ENCODE measurements at regions of chr14 and their contacts with region 1.

Region 1: DNA sequence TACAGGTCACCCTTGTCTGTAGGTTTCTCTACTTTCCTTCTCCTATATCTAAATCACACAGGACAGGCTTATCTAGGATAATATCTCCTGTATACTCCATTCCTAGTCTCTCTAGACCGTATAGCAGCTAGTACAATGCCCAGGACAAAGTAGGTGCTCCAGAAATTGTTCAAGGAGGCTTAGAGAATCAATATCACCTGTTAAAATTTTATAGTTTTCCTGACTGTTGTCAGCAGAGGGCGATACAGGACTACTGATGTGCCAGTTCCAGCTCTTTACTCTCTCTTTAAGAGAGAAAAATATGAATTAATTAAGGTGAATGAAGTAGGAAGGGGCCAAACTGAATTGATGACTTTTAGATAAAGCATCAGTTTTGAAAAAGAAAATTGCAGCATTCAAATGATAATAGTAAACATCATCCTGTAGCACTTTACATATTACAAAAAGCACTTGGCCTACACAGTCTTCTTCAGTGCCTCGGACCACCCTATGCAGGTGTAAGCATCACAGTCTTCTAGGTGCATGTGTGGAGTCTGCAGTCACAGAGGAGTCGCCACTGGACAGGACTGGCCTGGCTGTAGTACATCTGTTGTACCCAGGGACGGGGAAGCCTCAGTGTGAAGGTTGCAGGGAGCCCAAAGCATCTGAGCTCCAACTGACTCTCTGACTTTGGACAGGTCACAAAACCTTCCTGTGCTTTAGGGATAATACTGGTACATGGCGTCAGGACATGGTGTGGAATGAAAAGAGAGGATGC is 61.9 kb upstream of the MAX start:
- DNase-seq: peak; percentile 79
- ATAC-seq: peak; percentile 80
- H3K4me3 ChIP-seq: no peak overlapping the region
- H3K27ac ChIP-seq: no peak overlapping the region
- H3K4me1 ChIP-seq: peaks cover 4% of the 10 kb centered on the region; the same call in 1 of the 2 replicates
- H3K27me3 ChIP-seq: no peaks in the 10 kb centered on the region
- CTCF ChIP-seq: peak; percentile 94

Region 2: DNA sequence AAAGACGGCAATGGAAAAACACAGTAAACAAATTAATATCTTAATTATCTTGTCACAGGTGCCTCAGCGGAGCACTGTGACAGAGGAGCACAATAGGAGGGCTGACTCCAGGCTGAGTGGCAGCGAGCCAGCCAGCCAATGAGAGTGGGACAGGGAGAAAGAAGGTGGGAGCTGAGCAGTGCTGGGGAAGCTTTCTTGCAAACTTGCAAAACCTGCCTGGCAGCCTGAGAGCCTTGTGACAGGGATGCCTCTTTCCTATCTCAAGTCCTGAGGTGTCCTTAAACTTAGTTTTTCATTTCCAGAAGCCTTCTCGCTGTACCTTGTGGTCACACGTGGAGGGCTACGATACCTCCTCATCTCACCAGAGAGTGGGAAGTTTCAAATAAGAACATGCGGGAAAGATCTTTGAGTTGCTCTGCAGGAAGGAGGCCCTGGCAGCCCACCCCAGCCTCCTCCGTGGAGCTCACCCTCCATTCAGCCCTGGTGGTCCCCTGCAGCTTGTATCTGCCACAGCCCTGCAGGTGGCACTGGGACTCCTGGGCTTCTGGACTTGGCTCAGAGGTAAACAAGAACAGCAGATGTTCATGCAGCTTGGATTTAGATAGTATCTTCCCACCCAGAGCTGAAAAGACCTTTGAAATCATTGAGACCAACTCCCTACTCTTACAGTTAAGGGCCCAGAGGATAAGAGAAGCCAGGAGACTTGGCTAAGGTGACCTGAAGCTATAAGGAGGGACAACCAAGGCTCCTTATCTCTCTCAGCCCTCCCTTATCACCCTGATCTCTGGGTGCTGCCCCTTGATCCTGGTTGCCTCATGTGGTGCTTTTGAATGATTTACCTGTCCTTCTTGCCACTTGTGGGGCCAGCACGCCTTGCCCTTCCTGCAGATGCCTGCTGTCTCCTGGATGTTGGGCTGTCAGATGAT is 91.6 kb after region 1 on chr14:
- CTCF ChIA-PET with region 1: no interaction called
- POLR2A ChIA-PET with region 1: no interaction called
- intact Hi-C with region 1: no loop called
- DNase-seq: peak; percentile 95
- ATAC-seq: peak; percentile 62
- H3K4me3 ChIP-seq: peak overlapping the region; percentile 34
- H3K27ac ChIP-seq: peak overlapping the region; percentile 96
- H3K4me1 ChIP-seq: peaks cover 58% of the 10 kb centered on the region
- H3K27me3 ChIP-seq: no peaks in the 10 kb centered on the region
- CTCF ChIP-seq: no peak

Region 3: GRCh38 chr14:65373679-65374039 is 209.4 kb after region 1 on chr14:
- CTCF ChIA-PET with region 1: interaction called, 7 read pairs
- POLR2A ChIA-PET with region 1: no interaction called
- intact Hi-C with region 1: loop called (anchors 1 kb)
- DNase-seq: peak; percentile 29
- ATAC-seq: peak; percentile 75
- H3K4me3 ChIP-seq: peak overlapping the region; percentile 58
- H3K27ac ChIP-seq: 0 out of 2 replicates have a peak overlapping the region, but pooled peaks have one; percentile 0
- H3K4me1 ChIP-seq: no peaks in the 10 kb centered on the region
- H3K27me3 ChIP-seq: no peaks in the 10 kb centered on the region
- CTCF ChIP-seq: peak; percentile 28; the same call in 1 of the 2 replicates

Region 4: DNA sequence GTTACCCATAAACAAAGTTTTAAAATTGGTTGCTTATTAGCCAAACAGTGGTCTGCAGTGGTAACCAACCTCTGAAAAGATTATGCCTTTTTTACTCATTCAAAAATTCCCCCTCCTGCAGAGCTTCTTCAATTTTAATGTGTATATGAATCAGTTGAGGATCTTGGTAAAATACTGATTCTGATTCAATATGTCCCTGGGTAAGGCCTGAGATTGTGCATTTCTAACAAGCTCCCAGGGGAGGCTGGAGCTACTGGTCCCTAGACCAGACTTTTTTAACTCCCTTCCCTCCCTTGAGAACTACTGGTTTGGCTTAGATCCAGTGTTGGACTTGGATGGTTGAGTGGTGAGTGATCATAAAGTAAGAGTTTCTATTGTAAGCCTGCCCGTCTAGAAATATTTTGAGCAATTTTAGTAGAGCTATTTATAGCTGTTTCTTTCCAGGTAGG is 338.5 kb after region 1 on chr14:
- CTCF ChIA-PET with region 1: no interaction called
- POLR2A ChIA-PET with region 1: no interaction called
- intact Hi-C with region 1: loop called (anchors 5 kb)
- DNase-seq: peak; percentile 91
- ATAC-seq: peak; percentile 68
- H3K4me3 ChIP-seq: no peak overlapping the region
- H3K27ac ChIP-seq: no peak overlapping the region
- H3K4me1 ChIP-seq: peaks cover 11% of the 10 kb centered on the region; the same call in 1 of the 2 replicates
- H3K27me3 ChIP-seq: no peaks in the 10 kb centered on the region
- CTCF ChIP-seq: no peak

Region 5: DNA sequence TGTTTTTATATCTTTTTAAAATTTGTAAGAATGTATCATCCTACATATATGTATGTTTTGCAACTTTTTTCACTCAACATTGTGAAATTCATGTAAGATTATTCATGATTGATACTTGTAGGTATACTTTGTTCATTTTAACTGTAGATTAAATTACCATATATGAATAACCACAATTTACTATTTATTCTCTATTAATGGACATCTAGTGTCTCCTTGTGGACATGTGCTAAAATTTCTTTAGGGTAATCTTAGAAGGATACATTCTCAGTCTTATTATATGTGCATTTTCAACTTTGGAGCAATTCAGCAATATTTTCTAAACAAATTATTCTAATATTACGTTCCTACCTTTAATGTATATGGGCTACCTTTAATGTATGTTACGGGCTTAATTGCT is 440.7 kb after region 1 on chr14:
- CTCF ChIA-PET with region 1: no interaction called
- POLR2A ChIA-PET with region 1: no interaction called
- intact Hi-C with region 1: loop called (anchors 1 kb)
- DNase-seq: peak; percentile 35
- ATAC-seq: peak; percentile 74
- H3K4me3 ChIP-seq: no peak overlapping the region
- H3K27ac ChIP-seq: no peak overlapping the region
- H3K4me1 ChIP-seq: peaks cover 4% of the 10 kb centered on the region; the same call in 1 of the 2 replicates
- H3K27me3 ChIP-seq: no peaks in the 10 kb centered on the region
- CTCF ChIP-seq: peak; percentile 76

Region 6: GRCh38 chr14:65958664-65959562 is 794.7 kb after region 1 on chr14:
- CTCF ChIA-PET with region 1: interaction called, 6 read pairs
- POLR2A ChIA-PET with region 1: no interaction called
- intact Hi-C with region 1: loop called (anchors 1 kb)
- DNase-seq: peak; percentile 55
- ATAC-seq: peak; percentile 75
- H3K4me3 ChIP-seq: no peak overlapping the region
- H3K27ac ChIP-seq: no peak overlapping the region
- H3K4me1 ChIP-seq: no peaks in the 10 kb centered on the region
- H3K27me3 ChIP-seq: peaks cover 36% of the 10 kb centered on the region
- CTCF ChIP-seq: peak; percentile 75

Region 7: DNA sequence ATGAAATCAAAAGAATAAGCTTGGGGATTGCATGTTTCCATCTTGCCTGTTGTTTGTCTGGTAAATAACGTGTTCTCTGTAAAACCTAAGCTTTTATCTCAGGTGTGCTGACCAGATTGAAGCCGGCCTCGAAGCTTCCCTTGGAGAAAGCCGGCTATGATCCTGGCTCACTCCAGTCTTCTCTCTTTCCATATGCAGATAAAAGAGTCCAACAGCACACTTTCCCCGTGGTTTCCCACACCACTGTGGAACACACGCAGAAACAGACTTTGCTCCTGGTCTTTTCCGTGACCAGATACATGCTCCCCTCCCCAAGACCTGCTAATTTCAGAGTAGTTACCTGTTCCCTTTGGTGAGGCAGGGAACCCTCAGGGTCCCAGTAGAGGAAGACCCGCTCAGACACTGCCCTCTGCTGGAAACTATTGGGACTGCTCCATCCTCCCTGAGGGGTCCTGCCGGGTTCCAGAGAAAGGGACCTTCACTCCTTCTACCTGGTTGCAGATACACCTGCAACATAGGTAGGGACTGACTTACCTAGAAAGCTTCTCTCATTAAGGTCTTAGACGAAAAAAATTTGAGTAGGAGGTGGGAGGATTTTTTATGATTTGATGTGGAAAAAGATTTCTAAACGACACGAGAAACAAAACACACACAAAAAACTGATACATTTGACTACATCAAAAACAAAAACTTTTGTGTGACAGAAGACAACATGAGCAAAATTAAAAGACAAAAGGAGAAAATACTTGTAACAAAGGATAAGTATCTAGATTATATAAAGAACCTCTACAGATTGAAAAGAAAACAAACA is 906.5 kb after region 1 on chr14:
- CTCF ChIA-PET with region 1: no interaction called
- POLR2A ChIA-PET with region 1: no interaction called
- intact Hi-C with region 1: loop called (anchors 10 kb)
- DNase-seq: peak; percentile 74
- ATAC-seq: peak; percentile 76
- H3K4me3 ChIP-seq: no peak overlapping the region
- H3K27ac ChIP-seq: no peak overlapping the region
- H3K4me1 ChIP-seq: peaks cover 4% of the 10 kb centered on the region; the same call in 1 of the 2 replicates
- H3K27me3 ChIP-seq: peaks cover 67% of the 10 kb centered on the region
- CTCF ChIP-seq: peak; percentile 97